Mammary epithelial cell (primary cell): ENCODE measurements at regions of chr1 and their contacts with region 1.

Region 1: GRCh38 chr1:37423810-37424209 is 50.6 kb upstream of the ZC3H12A start:
- DNase-seq: no peak
- H3K4me3 ChIP-seq: no peak overlapping the region
- H3K27ac ChIP-seq: no peak overlapping the region
- H3K4me1 ChIP-seq: no peaks in the 10 kb centered on the region
- H3K27me3 ChIP-seq: no peaks in the 10 kb centered on the region
- CTCF ChIP-seq: no peak

Region 2: DNA sequence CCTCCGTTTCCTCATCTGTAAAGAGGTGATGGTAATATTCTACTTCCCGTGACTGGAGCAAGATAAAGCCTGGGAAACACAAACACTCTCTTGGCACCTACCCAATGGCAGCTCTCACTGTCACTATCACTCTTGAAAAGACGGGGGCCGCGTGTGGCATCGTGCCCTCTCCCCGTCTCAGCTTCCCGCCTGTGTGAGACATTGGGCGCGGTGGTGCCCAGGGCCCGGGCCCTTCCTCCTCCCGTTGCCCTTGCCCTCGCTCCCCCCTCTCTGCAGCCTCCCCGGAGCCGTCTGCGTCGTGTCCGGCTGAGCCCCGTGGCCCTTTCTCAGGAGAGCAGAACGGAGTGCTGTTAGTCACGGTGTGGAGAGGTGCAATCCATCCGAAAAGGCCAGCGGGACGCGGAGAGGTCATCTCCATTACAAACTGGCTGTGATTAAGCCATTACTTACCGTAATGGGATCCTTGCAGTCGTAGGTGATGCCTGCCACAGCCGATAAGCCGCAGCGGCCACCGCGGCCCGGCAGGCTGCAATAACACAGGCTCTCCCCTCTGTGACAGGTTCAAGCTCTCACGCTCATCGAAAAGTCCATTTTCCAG is 105.8 kb before region 1 on chr1:
- CTCF ChIA-PET with region 1: no interaction called
- dilution Hi-C with region 1: loop called (anchors 5 kb)
- in situ Hi-C with region 1: no loop called
- intact Hi-C with region 1: no loop called
- DNase-seq: no peak
- H3K4me3 ChIP-seq: no peak overlapping the region
- H3K27ac ChIP-seq: no peak overlapping the region
- H3K4me1 ChIP-seq: no peaks in the 10 kb centered on the region
- H3K27me3 ChIP-seq: peaks cover 3% of the 10 kb centered on the region
- CTCF ChIP-seq: no peak